Activated CD4-positive, alpha-beta T cell treated with anti-CD3 and anti-CD28 coated beads for 36 hours (primary cell): ENCODE measurements at regions of chr15 and their contacts with region 1.

Region 1: DNA sequence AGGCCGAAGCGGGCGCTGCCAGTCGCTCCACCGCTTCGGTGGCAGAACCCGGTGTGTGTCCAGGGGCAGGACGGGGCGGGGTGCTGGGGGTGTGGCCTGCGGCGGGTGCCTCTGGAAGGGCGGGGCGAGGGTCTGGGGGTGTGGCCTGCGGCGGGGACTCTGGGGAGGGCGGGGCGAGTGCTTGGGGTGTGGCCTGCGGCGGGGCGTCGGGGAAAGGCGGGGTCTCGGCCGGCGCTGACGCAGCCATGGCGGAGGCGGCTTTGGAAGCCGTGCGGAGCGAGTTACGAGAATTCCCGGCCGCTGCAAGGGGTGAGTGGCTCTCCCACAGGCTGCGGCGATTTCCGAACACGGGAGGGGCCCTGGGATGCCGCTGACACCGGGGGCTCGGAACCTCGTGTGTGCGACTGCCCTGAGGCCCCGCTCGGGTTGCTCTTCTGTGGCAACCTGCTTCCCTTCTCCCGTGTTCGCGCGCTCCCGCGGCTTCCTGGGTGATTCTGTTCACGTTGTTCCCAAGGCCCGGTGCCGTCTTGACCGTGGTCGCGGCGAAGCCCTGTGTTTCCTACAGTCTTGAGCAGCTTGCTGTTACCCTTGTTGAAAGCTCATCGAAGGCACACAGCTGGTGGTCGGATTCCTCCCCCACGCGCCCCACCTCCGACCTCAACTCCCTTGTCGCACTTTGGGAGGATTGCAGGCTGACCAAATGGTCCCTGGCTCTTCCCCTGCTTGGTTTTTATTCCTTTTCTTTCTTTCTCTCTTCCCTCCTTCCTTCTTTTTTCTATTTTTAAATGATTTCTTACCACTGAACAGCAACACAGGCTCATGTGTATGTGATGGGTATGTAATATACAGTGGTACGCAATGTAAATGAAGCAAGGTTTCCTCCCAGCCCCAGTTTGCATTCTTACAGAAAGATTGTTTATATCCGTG is at the start of gene JMJD7:
- DNase-seq: peak; percentile 99
- ATAC-seq: peak; percentile 96
- H3K4me3 Mint-ChIP-seq: peak within 1 kb of the TSS; percentile 80
- H3K27ac Mint-ChIP-seq: peak within 1 kb of the TSS; percentile 69
- H3K4me1 Mint-ChIP-seq: peaks cover 41% of the 10 kb centered on the region
- H3K27me3 Mint-ChIP-seq: no peaks in the 10 kb centered on the region
- total RNA-seq, gene JMJD7: 17.1 to 17.6 TPM

Region 2: DNA sequence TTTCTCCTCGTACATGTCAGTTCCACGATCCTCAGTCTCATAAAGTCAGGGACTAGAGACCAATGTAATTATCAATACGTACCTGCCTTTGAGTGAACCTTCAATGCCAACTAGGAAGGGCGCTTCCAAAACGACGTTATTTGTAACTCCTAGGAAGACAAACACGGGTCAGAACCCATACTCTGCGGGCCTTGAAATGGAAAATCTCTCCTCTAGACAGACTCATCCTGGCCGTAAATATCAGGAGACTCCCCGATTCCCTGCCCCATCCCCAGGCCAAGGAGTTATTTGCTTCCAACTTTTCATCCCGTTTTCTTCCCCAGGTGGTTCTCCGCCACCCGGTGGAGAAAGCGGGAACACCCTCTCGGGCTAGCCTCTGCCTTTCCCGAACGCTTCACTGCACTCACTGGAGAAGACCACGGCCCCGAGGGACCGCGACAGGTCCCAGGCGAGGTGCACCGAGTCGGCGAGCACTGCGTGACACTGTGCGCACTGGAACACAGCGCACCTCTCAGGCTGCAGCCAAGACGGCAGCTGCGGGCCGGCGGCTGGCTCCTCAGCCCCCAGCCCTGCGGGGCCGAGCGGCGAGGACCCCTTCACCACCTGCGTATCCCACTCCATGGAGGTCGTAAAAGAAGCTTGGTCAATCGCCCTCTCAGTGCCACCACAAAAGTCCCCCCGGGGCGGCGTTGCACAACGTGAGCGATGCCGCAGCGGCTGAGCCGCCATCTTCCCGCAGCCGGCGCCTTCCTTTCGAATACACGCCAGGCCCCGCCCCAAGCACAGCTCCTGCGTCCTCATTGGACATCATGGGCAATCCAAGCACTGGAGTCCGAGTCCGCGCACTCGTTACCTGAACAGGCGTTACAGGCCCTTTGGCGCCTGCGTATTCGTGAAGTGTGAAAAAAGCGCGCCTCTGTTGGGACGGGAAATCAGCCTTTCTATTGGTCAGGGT is 496.0 kb before region 1 on chr15 and contains the start of gene OIP5:
- CTCF ChIA-PET with region 1: no interaction called
- POLR2A ChIA-PET with region 1: no interaction called
- intact Hi-C with region 1: loop called in 1 of 2 experiments (anchors 5 kb)
- DNase-seq: peak; percentile 99
- ATAC-seq: peak; percentile 98
- H3K4me3 Mint-ChIP-seq: peak within 1 kb of the TSS; percentile 91
- H3K27ac Mint-ChIP-seq: peak within 1 kb of the TSS; percentile 92
- H3K4me1 Mint-ChIP-seq: peaks cover 26% of the 10 kb centered on the region
- H3K27me3 Mint-ChIP-seq: no peaks in the 10 kb centered on the region
- total RNA-seq, gene OIP5: 11.5 to 14.0 TPM

Region 3: GRCh38 chr15:41544650-41545015 is 283.5 kb before region 1 on chr15:
- CTCF ChIA-PET with region 1: no interaction called
- POLR2A ChIA-PET with region 1: no interaction called
- intact Hi-C with region 1: loop called in 1 of 2 experiments (anchors 1 kb)
- DNase-seq: peak; percentile 21
- ATAC-seq: no peak
- H3K4me3 Mint-ChIP-seq: peak overlapping the region; percentile 95
- H3K27ac Mint-ChIP-seq: peak overlapping the region; percentile 91
- H3K4me1 Mint-ChIP-seq: peaks cover 12% of the 10 kb centered on the region
- H3K27me3 Mint-ChIP-seq: no peaks in the 10 kb centered on the region

Region 4: DNA sequence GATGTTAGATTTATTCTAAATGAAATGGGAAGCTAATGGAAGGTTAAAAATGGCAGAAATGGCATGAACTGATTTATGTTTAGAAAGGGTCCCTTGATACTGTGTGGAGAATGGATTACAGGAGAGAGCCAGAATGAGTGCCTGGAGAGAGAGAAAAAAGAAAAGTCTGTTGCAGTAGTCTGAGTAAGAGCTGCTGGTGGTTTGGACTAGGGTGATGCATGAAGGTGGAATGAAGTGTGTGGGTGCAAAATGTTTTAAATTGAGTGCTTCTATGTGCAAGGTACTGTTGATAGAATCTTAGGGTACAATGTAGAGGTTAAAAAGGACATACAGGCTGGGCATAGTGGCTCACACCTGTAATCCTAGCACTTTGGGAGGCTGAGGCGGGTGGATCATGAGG is 179.4 kb before region 1 on chr15:
- CTCF ChIA-PET with region 1: no interaction called
- POLR2A ChIA-PET with region 1: no interaction called
- intact Hi-C with region 1: no loop called
- DNase-seq: no peak
- ATAC-seq: no peak
- H3K4me3 Mint-ChIP-seq: no peak overlapping the region
- H3K27ac Mint-ChIP-seq: no peak overlapping the region
- H3K4me1 Mint-ChIP-seq: no peaks in the 10 kb centered on the region
- H3K27me3 Mint-ChIP-seq: no peaks in the 10 kb centered on the region

Region 5: DNA sequence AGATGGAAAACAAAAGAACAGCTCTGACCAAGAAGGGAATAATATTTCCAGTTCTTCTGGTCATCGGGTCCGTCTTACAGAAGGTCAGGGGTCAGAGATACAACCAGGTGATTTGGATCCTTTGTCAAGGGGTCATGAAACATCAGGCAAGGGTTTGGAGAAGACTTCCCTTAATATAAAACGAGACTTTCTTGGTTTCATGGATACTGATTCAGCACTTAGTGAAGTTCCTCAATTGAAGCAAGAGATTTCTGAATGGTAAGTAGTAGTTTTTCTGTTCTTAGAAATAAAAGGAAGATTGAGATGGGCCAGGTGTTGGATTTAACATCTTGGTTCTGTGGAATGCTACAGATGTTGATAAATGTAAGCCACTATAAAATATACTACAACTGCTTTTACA is 158.4 kb before region 1 on chr15:
- CTCF ChIA-PET with region 1: no interaction called
- POLR2A ChIA-PET with region 1: no interaction called
- intact Hi-C with region 1: no loop called
- DNase-seq: no peak
- ATAC-seq: no peak
- H3K4me3 Mint-ChIP-seq: no peak overlapping the region
- H3K27ac Mint-ChIP-seq: no peak overlapping the region
- H3K4me1 Mint-ChIP-seq: peaks cover 37% of the 10 kb centered on the region
- H3K27me3 Mint-ChIP-seq: no peaks in the 10 kb centered on the region

Region 6: GRCh38 chr15:41894791-41895463 is 66.8 kb after region 1 on chr15:
- CTCF ChIA-PET with region 1: no interaction called
- POLR2A ChIA-PET with region 1: no interaction called
- intact Hi-C with region 1: loop called (anchors 2 to 5 kb)
- DNase-seq: peak; percentile 85
- ATAC-seq: peak; percentile 96
- H3K4me3 Mint-ChIP-seq: peak overlapping the region; percentile 19
- H3K27ac Mint-ChIP-seq: peak overlapping the region; percentile 74
- H3K4me1 Mint-ChIP-seq: peaks cover 29% of the 10 kb centered on the region
- H3K27me3 Mint-ChIP-seq: no peaks in the 10 kb centered on the region

Region 7: DNA sequence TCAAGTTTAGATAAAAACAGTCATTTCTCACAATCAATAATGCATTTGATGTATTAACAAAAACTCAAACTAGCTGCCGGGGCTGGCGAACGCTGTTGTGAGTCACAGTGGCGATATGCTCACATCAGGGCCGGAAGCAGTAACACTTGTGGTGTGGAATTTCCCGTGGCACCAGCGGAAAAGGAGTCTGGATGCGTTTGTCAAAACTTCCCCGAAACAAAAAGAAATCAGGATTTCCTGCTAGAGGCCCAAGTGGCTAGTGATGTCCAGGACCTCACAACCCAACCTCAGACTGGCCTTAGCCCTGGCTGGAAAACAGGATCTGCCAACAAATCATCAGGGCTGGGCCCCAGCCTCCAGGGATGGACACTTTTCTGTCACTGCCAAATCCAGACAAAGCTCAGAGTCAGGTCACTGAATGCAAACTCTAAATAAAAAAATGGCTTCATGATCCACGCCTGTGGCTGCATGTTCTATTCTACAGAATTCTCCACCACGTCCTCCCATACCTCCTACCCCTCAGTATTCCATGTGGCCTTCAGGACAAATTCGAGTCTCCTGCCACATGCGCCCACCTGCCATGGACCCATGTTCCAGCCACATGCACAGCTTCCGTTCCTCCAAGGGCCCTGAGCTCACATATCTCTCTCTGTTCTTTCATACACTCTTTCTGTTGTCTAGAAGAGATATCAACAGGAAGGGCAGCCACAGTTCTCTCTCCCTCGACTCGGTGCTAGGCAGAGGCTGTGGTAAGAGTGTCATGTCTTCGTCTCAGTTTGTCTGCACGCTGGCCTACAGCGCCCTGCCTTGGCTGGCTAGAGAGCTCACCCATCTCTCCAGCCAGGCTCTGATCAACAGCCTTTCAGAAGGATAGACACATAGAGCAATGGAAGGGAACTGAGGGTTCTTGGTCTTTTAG is 108.8 kb after region 1 on chr15:
- CTCF ChIA-PET with region 1: no interaction called
- POLR2A ChIA-PET with region 1: no interaction called
- intact Hi-C with region 1: loop called in 1 of 2 experiments (anchors 1 kb)
- DNase-seq: peak; percentile 91
- ATAC-seq: peak; percentile 62
- H3K4me3 Mint-ChIP-seq: peak overlapping the region; percentile 60
- H3K27ac Mint-ChIP-seq: peak overlapping the region; percentile 100
- H3K4me1 Mint-ChIP-seq: peaks cover 74% of the 10 kb centered on the region
- H3K27me3 Mint-ChIP-seq: no peaks in the 10 kb centered on the region